HEK293 (cell line): ENCODE measurements at regions of chr1 and their contacts with region 1.

Region 1: GRCh38 chr1:112390775-112391602 is 5.0 kb upstream of the CTTNBP2NL start:
- H3K4me3 ChIP-seq: peak overlapping the region; percentile 42
- H3K27ac ChIP-seq: no peak overlapping the region
- H3K4me1 ChIP-seq: peaks cover 10% of the 10 kb centered on the region
- CTCF ChIP-seq: peak; percentile 91

Region 2: GRCh38 chr1:112196731-112197130 is 194.3 kb before region 1 on chr1:
- CTCF ChIA-PET with region 1: no interaction called
- POLR2A ChIA-PET with region 1: no interaction called
- H3K4me3 ChIP-seq: no peak overlapping the region
- H3K27ac ChIP-seq: no peak overlapping the region
- H3K4me1 ChIP-seq: no peaks in the 10 kb centered on the region
- CTCF ChIP-seq: no peak

Region 3: DNA sequence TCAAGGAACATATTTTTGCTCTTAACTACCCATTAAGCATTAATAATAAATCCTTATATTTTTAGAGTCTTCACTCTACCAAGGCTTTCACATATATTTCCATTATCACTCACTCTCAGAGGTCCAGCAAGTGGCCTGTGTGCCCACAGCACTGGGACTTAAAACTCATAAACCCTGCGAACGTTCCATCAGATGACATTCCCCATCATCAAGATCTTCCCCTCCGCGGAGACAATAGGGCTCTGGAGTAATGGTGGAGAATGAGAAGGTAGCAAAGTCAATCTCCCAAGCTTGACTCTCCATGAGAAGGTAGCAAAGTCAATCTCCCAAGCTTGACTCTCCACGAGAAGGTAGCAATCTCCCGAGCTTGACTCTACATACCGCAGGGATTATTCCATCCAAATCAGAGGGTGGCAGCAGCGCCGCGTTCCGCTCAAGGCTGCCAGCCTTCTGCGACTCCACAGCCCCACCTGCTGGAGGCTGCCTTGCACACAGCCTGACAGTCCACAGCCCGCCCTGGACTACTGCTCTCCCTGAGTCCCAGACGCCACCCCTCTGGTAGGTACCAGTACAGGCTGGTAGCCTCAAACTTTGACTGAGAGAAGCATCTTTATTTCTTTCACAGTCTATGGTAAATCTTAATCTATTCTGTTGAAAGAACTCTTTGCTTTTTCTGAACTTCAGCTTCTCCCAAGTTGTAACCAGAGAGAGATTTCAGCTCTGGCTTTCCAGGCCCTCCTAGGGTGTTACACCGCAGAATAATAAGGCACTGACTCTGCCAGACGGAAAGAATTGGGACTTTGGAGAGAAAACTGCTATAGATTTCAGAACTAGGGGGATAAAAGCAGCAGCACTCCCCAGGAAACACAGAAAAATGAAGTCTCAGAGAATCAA is 21.4 kb before region 1 on chr1:
- CTCF ChIA-PET with region 1: interaction called, 17 read pairs
- POLR2A ChIA-PET with region 1: no interaction called
- H3K4me3 ChIP-seq: no peak overlapping the region
- H3K27ac ChIP-seq: no peak overlapping the region
- H3K4me1 ChIP-seq: no peaks in the 10 kb centered on the region
- CTCF ChIP-seq: peak; percentile 97

Region 4: DNA sequence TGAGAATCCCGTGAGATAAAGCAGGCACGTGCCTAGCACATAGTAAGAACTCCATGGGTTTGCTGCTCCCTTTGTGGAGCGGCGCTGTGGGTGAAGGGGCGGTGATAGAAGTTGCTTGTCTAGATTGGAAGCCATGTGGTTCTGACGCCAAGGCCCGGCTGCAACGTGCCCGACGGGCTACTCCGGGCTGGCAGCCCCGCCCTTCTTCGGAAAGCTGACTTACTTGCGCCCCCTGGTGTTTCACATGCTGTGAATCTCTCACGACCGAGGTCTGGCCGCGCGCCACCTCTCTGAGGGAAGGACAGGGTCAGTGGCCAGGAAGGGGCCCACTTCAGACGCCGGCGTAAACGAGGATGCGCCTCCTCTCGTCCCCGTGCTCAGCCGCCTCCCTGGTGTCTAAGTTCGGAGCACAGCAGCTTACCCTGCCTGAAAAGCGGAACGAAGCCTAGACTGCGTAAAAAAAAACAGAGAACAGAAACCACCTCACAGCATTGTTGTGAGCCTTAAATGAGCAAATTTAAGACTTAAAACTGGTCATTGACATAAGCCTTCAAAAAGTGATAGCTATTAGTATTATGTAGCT is 75.2 kb after region 1 on chr1:
- CTCF ChIA-PET with region 1: interaction called, 65 read pairs
- POLR2A ChIA-PET with region 1: interaction called, 8 read pairs
- H3K4me3 ChIP-seq: no peak overlapping the region
- H3K27ac ChIP-seq: no peak overlapping the region
- H3K4me1 ChIP-seq: no peaks in the 10 kb centered on the region
- CTCF ChIP-seq: peak; percentile 96

Region 5: DNA sequence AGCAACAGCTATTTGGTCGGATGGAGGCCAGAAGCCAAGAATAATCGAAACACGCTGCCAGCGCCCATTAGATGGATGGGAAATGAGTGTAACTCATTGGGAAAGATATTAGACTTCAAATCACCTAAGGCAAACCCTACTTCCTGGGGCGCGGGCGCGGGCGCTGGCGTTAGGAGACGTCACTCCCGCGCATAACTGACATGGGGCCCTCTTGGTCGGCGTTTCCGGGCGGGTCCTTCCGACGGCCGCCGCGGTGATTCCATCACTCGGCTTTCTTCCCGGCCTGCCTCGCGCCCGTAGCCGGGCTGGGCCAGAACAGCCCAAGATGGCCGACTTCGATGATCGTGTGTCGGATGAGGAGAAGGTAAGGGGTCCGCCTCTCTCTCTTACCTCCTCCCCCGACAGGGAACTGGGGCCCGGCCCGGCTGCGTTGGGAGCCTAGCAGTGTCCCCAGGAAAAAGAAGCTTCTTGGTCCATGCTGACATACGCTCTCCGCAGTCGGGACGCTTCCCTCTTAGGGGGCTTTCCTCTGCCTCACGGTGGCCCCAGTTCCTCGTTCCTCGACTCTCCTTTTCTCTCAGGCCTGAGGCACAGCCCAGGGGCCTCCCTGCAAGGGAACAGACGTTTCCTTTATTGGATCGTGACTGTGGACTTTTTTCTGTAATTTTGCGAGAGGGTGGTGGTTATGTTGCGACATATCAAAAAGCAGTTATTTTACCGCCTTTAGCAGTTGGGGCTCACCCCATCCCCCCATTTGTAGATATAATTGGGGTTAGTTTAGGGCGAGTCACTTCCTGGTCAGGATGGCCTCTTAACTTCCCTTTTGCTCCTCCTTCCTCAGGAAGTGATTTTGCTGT is 228.8 kb after region 1 on chr1 and contains the start of gene CAPZA1:
- CTCF ChIA-PET with region 1: interaction called, 60 read pairs
- POLR2A ChIA-PET with region 1: interaction called, 6 read pairs
- H3K4me3 ChIP-seq: peak within 1 kb of the TSS; percentile 99
- H3K27ac ChIP-seq: peak within 1 kb of the TSS; percentile 94
- H3K4me1 ChIP-seq: no peaks in the 10 kb centered on the region
- CTCF ChIP-seq: peak; percentile 79

Region 6: GRCh38 chr1:112706908-112707663 is 316.1 kb after region 1 on chr1 and contains the start of gene RHOC:
- CTCF ChIA-PET with region 1: interaction called, 20 read pairs
- POLR2A ChIA-PET with region 1: interaction called, 7 read pairs
- H3K4me3 ChIP-seq: peak within 1 kb of the TSS; percentile 80
- H3K27ac ChIP-seq: peak within 1 kb of the TSS; percentile 79
- H3K4me1 ChIP-seq: peaks cover 5% of the 10 kb centered on the region
- CTCF ChIP-seq: peak; percentile 97